ENCODE measurements at regions of chr11 and their contacts with region 1.

Region 1: GRCh38 chr11:44538375-44539054 is 26.9 kb upstream of the CD82 start:
- DNase-seq: peak; percentile 82
- H3K4me3 Mint-ChIP-seq: no peak overlapping the region
- H3K27ac Mint-ChIP-seq: no peak overlapping the region
- H3K4me1 Mint-ChIP-seq: peaks cover 3% of the 10 kb centered on the region
- H3K27me3 Mint-ChIP-seq: peaks cover 4% of the 10 kb centered on the region

Region 2: GRCh38 chr11:44110231-44110679 is 428.3 kb before region 1 on chr11:
- CTCF ChIA-PET with region 1: interaction called, 4 read pairs
- POLR2A ChIA-PET with region 1: no interaction called
- intact Hi-C with region 1: loop called (anchors 5 kb)
- DNase-seq: peak; percentile 70
- H3K4me3 Mint-ChIP-seq: no peak overlapping the region
- H3K27ac Mint-ChIP-seq: no peak overlapping the region
- H3K4me1 Mint-ChIP-seq: peaks cover 8% of the 10 kb centered on the region
- H3K27me3 Mint-ChIP-seq: no peaks in the 10 kb centered on the region

Region 3: GRCh38 chr11:44286268-44286880 is 252.1 kb before region 1 on chr11:
- CTCF ChIA-PET with region 1: interaction called, 48 read pairs
- POLR2A ChIA-PET with region 1: no interaction called
- intact Hi-C with region 1: loop called (anchors 1 kb)
- DNase-seq: peak; percentile 76
- H3K4me3 Mint-ChIP-seq: no peak overlapping the region
- H3K27ac Mint-ChIP-seq: no peak overlapping the region
- H3K4me1 Mint-ChIP-seq: no peaks in the 10 kb centered on the region
- H3K27me3 Mint-ChIP-seq: no peaks in the 10 kb centered on the region

Region 4: DNA sequence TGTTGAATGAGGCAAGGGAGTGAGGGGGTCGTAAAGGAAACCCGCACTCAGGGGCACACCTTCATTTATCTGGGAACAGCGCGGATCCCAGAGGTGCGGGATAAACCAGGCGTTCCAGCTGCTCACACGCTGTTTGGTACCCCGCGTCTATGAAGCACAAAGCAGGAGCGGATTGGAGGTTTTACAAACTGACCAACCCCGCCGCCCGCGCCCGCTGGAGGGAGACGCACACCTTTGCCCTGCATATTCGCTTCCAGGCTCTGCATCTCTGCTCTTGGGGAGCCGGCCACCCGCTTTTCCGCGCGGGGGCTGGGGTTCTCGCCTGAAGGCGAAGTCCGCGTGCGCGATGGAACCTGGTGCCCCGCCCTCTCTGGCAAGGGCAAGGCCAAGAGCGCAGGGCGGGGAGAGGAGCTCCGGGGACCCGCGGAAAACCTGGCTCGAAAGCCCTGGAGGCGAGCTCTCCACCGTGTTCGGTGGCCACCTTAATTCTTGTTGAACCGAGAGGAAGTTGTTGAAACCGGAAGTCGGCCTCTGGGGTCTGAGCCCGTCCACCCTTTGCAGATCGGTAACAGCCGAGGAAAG is 221.8 kb before region 1 on chr11:
- CTCF ChIA-PET with region 1: no interaction called
- POLR2A ChIA-PET with region 1: no interaction called
- intact Hi-C with region 1: no loop called
- DNase-seq: no peak
- H3K4me3 Mint-ChIP-seq: no peak overlapping the region
- H3K27ac Mint-ChIP-seq: no peak overlapping the region
- H3K4me1 Mint-ChIP-seq: peaks cover 15% of the 10 kb centered on the region
- H3K27me3 Mint-ChIP-seq: peaks cover 87% of the 10 kb centered on the region

Region 5: DNA sequence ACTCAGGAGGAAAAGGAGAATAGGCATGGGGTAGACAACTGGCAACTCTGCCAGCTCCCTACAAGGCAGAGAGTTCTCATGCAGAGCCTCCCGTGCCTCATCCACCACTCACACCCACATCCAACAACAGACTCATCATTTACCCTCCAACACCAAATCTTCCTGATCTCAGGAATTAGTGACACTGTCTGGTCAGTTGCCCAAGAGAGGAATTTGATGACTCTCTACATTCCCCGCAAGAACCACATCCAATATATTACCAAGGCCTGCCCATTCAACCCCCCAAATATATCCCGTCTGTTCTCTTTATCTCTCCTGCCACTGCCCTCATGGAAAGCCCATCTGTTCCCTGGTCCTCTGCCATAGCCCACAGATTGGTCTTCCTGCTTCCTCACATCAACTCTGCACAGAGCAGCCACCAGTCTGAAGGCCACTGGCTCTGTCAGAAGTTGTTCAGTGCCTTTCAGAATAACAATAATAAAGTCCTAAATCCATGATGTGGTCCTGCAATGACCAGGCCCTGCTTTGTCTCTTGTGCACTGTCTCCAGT is 30.5 kb before region 1 on chr11:
- CTCF ChIA-PET with region 1: no interaction called
- POLR2A ChIA-PET with region 1: no interaction called
- intact Hi-C with region 1: no loop called
- DNase-seq: no peak
- H3K4me3 Mint-ChIP-seq: no peak overlapping the region
- H3K27ac Mint-ChIP-seq: no peak overlapping the region
- H3K4me1 Mint-ChIP-seq: no peaks in the 10 kb centered on the region
- H3K27me3 Mint-ChIP-seq: peaks cover 10% of the 10 kb centered on the region

Region 6: DNA sequence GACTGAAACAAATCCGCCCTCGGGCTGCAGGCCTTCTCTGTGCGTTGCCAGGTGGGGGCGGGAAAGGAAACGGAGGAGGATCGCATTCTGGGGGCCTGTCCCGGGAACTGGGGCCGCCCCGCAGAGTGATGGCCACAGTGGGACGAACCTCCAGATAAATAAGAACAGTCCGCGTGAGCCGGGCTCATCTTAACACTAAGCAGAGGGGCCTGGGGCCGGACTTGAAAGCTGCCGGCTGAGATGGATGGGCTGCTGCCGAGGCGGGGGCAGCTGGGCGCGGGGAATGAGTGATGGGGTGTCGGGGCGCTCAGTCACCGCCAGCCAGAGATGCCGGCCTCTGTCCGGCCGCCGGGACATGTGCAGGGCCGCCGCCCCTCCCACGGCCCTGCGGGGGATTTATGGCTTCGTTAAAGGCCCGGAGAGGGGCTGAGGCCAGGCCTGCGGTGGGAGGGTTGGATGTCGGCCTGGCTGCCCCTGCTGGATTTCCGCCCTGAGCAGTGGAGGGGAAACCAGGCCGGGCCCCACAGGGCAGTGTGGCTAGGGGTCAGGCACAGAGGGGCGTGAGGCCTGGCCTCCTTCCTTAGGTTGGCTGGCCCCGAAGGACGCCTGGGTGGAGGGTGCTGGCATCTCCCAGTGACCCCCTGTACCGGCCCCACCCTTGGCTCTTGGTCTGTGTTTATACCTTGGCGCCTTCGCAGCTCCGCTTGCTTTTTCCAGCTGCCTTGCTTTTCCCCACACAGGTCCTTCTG is 18.4 kb before region 1 on chr11:
- CTCF ChIA-PET with region 1: interaction called, 60 read pairs
- POLR2A ChIA-PET with region 1: no interaction called
- intact Hi-C with region 1: loop called (anchors 1 kb)
- DNase-seq: no peak
- H3K4me3 Mint-ChIP-seq: no peak overlapping the region
- H3K27ac Mint-ChIP-seq: no peak overlapping the region
- H3K4me1 Mint-ChIP-seq: no peaks in the 10 kb centered on the region
- H3K27me3 Mint-ChIP-seq: peaks cover 22% of the 10 kb centered on the region

Region 7: DNA sequence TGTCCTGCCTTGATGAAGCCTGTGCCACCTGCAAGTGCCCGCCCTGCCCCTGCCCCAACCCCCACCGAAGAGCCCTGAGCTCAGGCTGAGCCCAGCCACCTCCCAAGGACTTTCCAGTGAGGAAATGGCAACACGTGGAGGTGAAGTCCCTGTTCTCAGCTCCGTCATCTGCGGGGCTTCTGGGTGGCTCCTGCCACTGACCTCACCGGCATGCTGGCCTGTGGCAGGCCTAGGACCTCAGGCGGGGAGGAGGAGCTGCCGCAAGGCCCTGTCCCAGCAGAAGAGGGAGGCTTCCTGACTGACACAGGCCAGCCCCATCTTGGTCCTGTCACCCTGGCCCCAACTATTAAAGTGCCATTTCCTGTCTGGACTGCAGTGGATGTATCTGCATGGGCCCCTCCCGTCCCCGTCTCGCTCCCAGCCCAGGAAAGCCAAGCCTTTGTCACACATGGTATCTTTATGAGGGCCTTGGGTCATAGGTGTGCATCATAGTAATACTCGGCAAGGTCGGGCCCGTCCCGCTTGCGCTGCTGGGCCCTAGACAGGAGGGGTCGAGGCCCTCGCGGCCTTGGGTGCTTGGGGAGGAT is 1367.7 kb after region 1 on chr11:
- CTCF ChIA-PET with region 1: no interaction called
- POLR2A ChIA-PET with region 1: no interaction called
- intact Hi-C with region 1: no loop called
- DNase-seq: peak; percentile 17
- H3K4me3 Mint-ChIP-seq: no peak overlapping the region
- H3K27ac Mint-ChIP-seq: no peak overlapping the region
- H3K4me1 Mint-ChIP-seq: peaks cover 4% of the 10 kb centered on the region
- H3K27me3 Mint-ChIP-seq: no peaks in the 10 kb centered on the region

Measured in activated CD4-positive, alpha-beta memory T cell treated with anti-CD3 and anti-CD28 coated beads for 36 hours (primary cell).